HEK293 (cell line): ENCODE measurements at regions of chr11 and their contacts with region 1.

Region 1: GRCh38 chr11:61627567-61628445 is 46.9 kb upstream of the SYT7 start:
- H3K4me3 ChIP-seq: no peak overlapping the region
- H3K27ac ChIP-seq: no peak overlapping the region
- H3K4me1 ChIP-seq: no peaks in the 10 kb centered on the region
- CTCF ChIP-seq: 0 out of 2 replicates have a peak, but pooled peaks have one; percentile 31

Region 2: DNA sequence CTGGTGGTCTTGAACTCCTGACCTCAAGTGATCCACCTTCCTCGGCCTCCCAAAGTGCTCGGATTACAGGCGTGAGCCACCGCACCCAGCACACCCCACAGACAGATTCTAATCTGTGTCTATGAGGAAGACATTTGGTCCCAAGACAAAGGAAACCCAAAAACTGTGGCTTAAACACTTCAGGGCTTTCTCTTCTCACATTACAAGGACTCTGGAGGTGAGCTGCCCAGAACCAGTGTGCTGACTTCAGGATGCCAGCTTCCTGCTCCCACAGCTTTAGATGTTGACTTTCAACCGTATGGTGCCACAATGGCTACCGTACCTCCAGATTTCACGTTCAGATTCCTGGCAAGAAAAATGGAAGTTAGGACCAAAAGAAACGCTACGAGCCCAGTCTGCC is 14.8 kb before region 1 on chr11:
- CTCF ChIA-PET with region 1: interaction called, 14 read pairs
- POLR2A ChIA-PET with region 1: no interaction called
- H3K4me3 ChIP-seq: no peak overlapping the region
- H3K27ac ChIP-seq: no peak overlapping the region
- H3K4me1 ChIP-seq: no peaks in the 10 kb centered on the region
- CTCF ChIP-seq: no peak

Region 3: DNA sequence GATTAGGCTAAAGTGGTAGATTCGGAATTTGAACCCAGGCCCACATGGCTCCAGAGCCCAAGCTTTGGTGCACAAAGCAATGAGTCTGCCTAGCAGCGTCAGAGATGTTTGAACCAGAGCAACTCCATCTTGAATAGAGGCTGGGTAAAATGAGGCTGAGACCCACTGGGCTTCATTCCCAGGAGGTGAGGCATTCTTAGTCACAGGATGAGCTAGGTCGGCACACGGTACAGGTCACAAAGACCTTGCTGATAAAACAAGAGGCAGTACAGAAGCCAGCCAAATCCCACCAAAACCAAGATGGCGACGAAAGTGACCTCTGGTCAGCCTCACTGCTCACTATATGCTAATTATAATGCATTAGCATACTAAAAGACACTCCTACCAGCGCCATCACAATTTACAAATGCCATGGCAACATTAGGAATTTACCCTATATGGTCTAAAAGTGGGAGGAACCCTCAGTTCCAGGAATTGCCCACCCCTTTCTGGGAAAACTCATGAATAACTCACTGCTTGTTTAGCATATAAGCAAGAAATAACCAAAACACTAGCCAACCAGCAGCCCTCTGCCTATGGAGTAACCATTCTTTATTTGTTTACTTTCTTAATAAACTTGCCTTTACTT is 12.1 kb after region 1 on chr11:
- CTCF ChIA-PET with region 1: interaction called, 14 read pairs
- POLR2A ChIA-PET with region 1: no interaction called
- H3K4me3 ChIP-seq: no peak overlapping the region
- H3K27ac ChIP-seq: no peak overlapping the region
- H3K4me1 ChIP-seq: no peaks in the 10 kb centered on the region
- CTCF ChIP-seq: no peak

Region 4: GRCh38 chr11:61695917-61696316 is 68.1 kb after region 1 on chr11:
- CTCF ChIA-PET with region 1: no interaction called
- POLR2A ChIA-PET with region 1: no interaction called
- H3K4me3 ChIP-seq: no peak overlapping the region
- H3K27ac ChIP-seq: no peak overlapping the region
- H3K4me1 ChIP-seq: no peaks in the 10 kb centered on the region
- CTCF ChIP-seq: no peak

Region 5: GRCh38 chr11:61711498-61711897 is 83.7 kb after region 1 on chr11:
- CTCF ChIA-PET with region 1: no interaction called
- POLR2A ChIA-PET with region 1: no interaction called
- H3K4me3 ChIP-seq: no peak overlapping the region
- H3K27ac ChIP-seq: no peak overlapping the region
- H3K4me1 ChIP-seq: no peaks in the 10 kb centered on the region
- CTCF ChIP-seq: no peak

Region 6: DNA sequence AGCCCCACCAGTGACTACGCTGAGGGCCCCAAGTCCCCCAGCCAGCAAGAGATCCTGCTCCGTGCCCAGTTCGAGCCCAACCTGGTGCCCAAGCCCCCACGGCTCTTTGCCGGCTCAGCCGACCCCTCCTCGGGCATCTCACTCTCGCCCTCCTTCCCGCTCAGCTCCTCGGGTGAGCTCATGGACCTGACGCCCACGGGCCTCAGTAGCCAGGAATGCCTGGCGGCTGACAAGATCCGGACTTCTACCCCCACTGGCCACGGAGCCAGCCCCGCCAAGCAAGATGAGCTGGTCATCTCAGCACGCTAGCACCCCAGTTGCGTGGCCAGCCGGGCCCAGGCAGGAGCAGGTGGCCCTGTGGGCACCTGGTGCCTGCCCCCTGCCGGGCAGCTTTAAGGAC is 116.4 kb after region 1 on chr11:
- CTCF ChIA-PET with region 1: no interaction called
- POLR2A ChIA-PET with region 1: no interaction called
- H3K4me3 ChIP-seq: no peak overlapping the region
- H3K27ac ChIP-seq: no peak overlapping the region
- H3K4me1 ChIP-seq: no peaks in the 10 kb centered on the region
- CTCF ChIP-seq: no peak